Endothelial cell of umbilical vein (primary cell): ENCODE measurements at regions of chr15 and their contacts with region 1.

Region 1: GRCh38 chr15:24848050-24848449 is 106.7 kb upstream of the SNRPN start:
- DNase-seq: peak; percentile 45
- H3K4me3 ChIP-seq: peak overlapping the region; percentile 36 to 60 (median 45)
- H3K27ac ChIP-seq: no peak overlapping the region
- H3K4me1 ChIP-seq: no peaks in the 10 kb centered on the region
- H3K27me3 ChIP-seq: no peaks in the 10 kb centered on the region
- CTCF ChIP-seq: no peak
- POLR2A ChIP-seq: no peak

Region 2: GRCh38 chr15:24761704-24762302 is 86.2 kb before region 1 on chr15:
- CTCF ChIA-PET with region 1: no interaction called
- POLR2A ChIA-PET with region 1: no interaction called
- dilution Hi-C with region 1: no loop called
- intact Hi-C with region 1: loop called (anchors 1 kb)
- DNase-seq: peak; percentile 9
- H3K4me3 ChIP-seq: no peak overlapping the region
- H3K27ac ChIP-seq: no peak overlapping the region
- H3K4me1 ChIP-seq: no peaks in the 10 kb centered on the region
- H3K27me3 ChIP-seq: no peaks in the 10 kb centered on the region
- CTCF ChIP-seq: peak in 1 of 2 donors; percentile 29
- POLR2A ChIP-seq: no peak

Region 3: DNA sequence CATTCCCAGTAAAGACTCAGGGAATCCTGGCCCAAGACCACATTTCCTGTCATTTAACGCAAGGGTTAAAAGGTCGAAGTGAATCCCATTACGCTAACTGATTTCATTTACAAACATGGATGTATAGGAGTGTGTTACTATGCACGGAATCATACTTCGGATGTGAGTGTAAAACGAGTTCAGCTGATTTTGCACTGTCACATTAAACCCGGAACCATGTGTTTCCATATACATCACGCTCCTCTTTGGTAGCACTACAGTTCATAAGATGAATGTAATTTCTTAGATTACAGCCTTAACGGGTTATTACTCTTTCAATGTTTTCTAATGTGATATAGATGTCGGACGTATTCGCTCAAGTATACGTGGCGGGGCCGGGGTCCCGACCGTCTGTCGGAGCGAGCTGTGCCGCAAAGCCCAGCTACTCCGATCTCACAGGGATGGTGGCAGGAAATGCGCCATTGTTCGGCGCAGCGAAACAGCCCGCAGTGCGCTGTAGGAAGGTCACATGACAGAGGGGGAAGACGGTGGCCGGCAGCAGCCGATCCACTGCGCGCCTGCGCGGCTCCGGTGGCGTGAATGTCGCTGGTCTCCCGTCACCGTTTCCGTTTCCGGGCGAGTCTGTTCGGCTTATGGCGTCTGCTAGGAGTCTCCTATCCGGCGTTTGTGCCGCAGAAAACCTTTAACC is 75.2 kb before region 1 on chr15:
- CTCF ChIA-PET with region 1: no interaction called
- POLR2A ChIA-PET with region 1: no interaction called
- dilution Hi-C with region 1: no loop called
- intact Hi-C with region 1: loop called (anchors 1 kb)
- DNase-seq: peak; percentile 81
- H3K4me3 ChIP-seq: peak overlapping the region in 2 of 3 experiments; percentile 40 to 49
- H3K27ac ChIP-seq: peak overlapping the region; percentile 65
- H3K4me1 ChIP-seq: no peaks in the 10 kb centered on the region
- H3K27me3 ChIP-seq: no peaks in the 10 kb centered on the region
- CTCF ChIP-seq: no peak
- POLR2A ChIP-seq: peak; percentile 33